Activated naive CD4-positive, alpha-beta T cell treated with anti-CD3 and anti-CD28 coated beads for 36 hours (primary cell): ENCODE measurements at regions of chr4 and their contacts with region 1.

Region 1: GRCh38 chr4:183398227-183399125 is 46.0 kb upstream of the CDKN2AIP start:
- DNase-seq: peak; percentile 75
- H3K4me3 Mint-ChIP-seq: peak overlapping the region; percentile 85
- H3K27ac Mint-ChIP-seq: no peak overlapping the region
- H3K4me1 Mint-ChIP-seq: peaks cover 19% of the 10 kb centered on the region
- H3K27me3 Mint-ChIP-seq: no peaks in the 10 kb centered on the region

Region 2: DNA sequence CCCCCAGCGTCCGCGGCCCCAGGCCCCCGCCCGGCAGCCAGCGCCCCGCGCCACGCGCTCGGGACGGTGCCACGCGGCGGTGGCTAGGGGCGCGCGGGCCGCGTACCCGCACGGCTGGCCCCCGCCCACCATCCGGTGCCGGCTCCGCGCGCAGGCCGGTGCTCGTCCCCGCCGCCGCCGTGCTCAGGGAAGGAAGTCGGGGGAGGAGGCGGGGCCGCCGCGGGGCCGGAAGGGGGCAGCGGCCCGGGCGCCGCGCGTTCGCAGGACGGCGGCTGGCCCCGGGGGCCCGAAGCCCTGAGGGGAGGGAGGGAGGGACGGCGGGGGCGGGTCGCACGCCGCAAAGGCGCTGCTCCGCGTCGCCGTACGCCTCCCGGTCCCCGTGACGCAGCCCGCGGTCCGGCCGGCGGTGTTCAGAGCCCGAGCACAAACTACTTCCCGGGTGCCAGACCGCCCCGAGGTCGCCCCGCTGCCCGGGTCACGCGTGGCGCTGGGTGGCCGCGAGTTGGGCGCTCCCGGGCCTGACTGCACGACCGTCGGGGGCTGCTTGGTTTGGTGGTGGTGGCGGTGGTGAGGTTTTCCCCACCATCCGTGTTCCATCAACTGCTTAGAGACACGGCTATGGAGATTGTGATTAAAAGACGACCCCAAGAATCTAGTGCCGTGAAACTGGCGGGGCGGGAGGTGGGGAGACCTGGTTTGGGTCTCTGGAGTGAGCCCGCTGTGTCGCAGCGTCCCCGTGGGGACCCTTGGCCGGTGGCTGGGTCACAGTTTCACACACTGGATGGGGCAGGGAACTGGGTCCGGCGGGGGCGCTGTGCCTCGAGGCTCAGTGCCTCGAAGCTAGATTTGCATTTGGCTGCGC is 481.1 kb before region 1 on chr4 and contains the start of gene DCTD:
- CTCF ChIA-PET with region 1: no interaction called
- intact Hi-C with region 1: loop called (anchors 2 kb)
- DNase-seq: peak; percentile 83
- H3K4me3 Mint-ChIP-seq: peak within 1 kb of the TSS; percentile 86
- H3K27ac Mint-ChIP-seq: peak within 1 kb of the TSS; percentile 92
- H3K4me1 Mint-ChIP-seq: peaks cover 53% of the 10 kb centered on the region
- H3K27me3 Mint-ChIP-seq: no peaks in the 10 kb centered on the region
- total RNA-seq, gene DCTD: 137 to 152 TPM

Region 3: GRCh38 chr4:183074296-183074990 is 324.0 kb before region 1 on chr4:
- CTCF ChIA-PET with region 1: interaction called, 3 read pairs
- intact Hi-C with region 1: loop called (anchors 2 kb)
- DNase-seq: no peak
- H3K4me3 Mint-ChIP-seq: no peak overlapping the region
- H3K27ac Mint-ChIP-seq: no peak overlapping the region
- H3K4me1 Mint-ChIP-seq: no peaks in the 10 kb centered on the region
- H3K27me3 Mint-ChIP-seq: peaks cover 2% of the 10 kb centered on the region

Region 4: GRCh38 chr4:183106839-183107238 is 291.6 kb before region 1 on chr4:
- CTCF ChIA-PET with region 1: no interaction called
- intact Hi-C with region 1: no loop called
- DNase-seq: no peak
- H3K4me3 Mint-ChIP-seq: no peak overlapping the region
- H3K27ac Mint-ChIP-seq: no peak overlapping the region
- H3K4me1 Mint-ChIP-seq: no peaks in the 10 kb centered on the region
- H3K27me3 Mint-ChIP-seq: no peaks in the 10 kb centered on the region

Region 5: GRCh38 chr4:183287677-183288076 is 110.8 kb before region 1 on chr4:
- CTCF ChIA-PET with region 1: no interaction called
- intact Hi-C with region 1: loop called (anchors 2 kb)
- DNase-seq: no peak
- H3K4me3 Mint-ChIP-seq: no peak overlapping the region
- H3K27ac Mint-ChIP-seq: no peak overlapping the region
- H3K4me1 Mint-ChIP-seq: no peaks in the 10 kb centered on the region
- H3K27me3 Mint-ChIP-seq: no peaks in the 10 kb centered on the region

Region 6: GRCh38 chr4:183610033-183610432 is 211.6 kb after region 1 on chr4:
- CTCF ChIA-PET with region 1: no interaction called
- intact Hi-C with region 1: no loop called
- DNase-seq: no peak
- H3K4me3 Mint-ChIP-seq: no peak overlapping the region
- H3K27ac Mint-ChIP-seq: no peak overlapping the region
- H3K4me1 Mint-ChIP-seq: no peaks in the 10 kb centered on the region
- H3K27me3 Mint-ChIP-seq: peaks cover 2% of the 10 kb centered on the region